ENCODE measurements at regions of chr12 and their contacts with region 1.

Region 1: DNA sequence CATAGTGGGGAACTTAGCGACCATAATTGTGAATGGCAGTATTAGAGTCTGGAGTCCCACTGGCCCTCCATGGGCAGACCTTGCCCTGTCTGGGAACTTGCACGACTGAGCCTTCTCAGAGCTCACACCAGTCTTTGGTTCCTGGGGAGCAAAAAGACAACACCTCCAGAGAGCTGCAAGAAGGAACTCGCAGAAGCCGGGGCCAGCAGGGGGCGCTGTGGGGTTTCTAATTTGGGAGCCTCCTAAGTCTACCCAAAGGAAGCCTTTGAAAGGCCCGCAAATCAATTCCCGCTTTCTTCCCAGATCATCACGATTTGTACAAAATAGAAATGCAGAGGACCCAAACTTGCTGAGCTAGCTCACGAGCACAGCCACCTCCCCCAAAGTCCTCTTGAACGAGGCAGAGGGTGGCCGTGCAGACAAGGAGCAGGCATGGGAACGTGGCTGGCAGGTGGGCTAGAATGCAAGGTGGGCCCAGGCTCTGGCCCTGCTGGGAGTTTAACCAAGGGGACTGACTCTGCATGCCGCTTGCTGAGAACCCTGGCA is 46.3 kb upstream of the FBXO21 start:
- DNase-seq: peak; percentile 89
- ATAC-seq: peak; percentile 65

Region 2: DNA sequence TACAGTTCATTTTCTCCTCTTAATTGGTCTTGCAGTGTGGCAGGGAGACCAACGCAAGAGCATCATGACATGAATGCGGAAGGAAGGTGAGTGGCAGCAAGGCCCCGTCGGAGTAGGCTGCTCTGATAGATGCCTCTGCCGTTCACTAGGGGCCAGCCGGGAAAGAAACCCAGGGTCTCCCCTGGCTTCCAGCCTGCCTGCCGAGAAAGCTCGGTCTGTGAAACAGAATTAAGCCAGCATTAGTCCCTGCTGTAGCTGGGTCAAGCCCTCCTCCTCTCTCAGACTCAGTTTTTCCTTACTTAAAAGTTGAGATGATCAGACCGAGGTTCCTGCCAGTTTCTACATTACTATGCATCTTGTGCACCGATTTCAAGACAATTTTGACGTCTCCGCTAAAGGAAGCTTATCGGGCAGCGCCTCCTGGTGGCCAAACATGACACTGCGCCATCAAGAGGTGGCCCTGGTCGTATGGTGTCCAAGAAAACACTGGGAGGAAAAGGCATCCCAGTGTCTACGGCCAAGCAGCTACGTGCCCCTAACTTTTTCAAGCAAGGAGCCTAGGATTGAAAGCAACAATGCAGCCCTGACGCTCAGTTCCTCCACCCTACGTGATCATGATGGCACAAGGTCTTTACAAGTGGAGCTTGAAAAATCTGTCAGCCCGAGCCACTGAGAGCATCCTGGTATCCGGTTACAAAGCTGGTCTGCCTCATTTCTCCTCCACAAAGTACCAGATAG is 600.6 kb after region 1 on chr12:
- intact Hi-C with region 1: loop called (anchors 10 kb)
- DNase-seq: peak; percentile 84
- ATAC-seq: peak; percentile 62